Activated CD4-positive, alpha-beta memory T cell treated with anti-CD3 and anti-CD28 coated beads for 36 hours (primary cell): ENCODE measurements at regions of chr16 and their contacts with region 1.

Region 1: DNA sequence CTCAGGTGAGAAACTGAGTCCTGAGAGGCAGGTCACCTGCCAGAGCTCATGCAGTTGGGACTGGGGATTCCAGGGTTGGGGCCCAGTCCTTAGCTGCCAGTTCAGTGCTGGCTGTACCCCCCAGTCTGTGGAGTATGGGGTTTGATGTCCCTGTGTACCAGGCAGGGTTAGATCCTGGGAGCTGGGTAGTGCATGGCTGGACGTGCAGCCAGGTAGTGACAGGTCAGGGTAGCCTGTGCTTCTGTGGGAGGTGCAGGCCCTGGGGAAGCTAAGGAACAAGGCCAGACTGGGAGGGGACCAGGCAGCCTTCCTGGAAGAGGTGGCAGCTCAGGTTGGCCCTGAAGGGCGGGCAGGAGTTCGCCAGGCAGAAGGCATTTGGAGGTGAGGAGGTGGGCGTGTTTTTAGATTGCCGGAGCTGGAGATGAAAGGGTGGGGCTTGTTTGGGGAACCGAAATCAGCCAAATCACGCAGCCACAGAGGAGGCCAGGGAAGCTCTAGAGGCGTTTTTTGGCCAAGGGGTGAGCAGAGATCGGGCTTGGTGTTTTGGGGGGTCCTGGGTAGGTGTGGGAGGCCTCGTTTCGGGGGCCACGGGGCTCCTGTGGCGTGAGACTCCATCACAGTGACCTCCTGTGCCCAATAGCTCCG is 7.5 kb downstream of the ADCY7 start:
- DNase-seq: peak; percentile 67
- H3K4me3 Mint-ChIP-seq: peak overlapping the region; percentile 94
- H3K27ac Mint-ChIP-seq: peak overlapping the region; percentile 99
- H3K4me1 Mint-ChIP-seq: peaks cover 91% of the 10 kb centered on the region
- H3K27me3 Mint-ChIP-seq: no peaks in the 10 kb centered on the region

Region 2: GRCh38 chr16:50185005-50185505 is 88.7 kb before region 1 on chr16:
- CTCF ChIA-PET with region 1: no interaction called
- POLR2A ChIA-PET with region 1: no interaction called
- intact Hi-C with region 1: no loop called
- DNase-seq: no peak
- H3K4me3 Mint-ChIP-seq: no peak overlapping the region
- H3K27ac Mint-ChIP-seq: no peak overlapping the region
- H3K4me1 Mint-ChIP-seq: peaks cover 45% of the 10 kb centered on the region
- H3K27me3 Mint-ChIP-seq: no peaks in the 10 kb centered on the region

Region 3: GRCh38 chr16:50210266-50211038 is 63.4 kb before region 1 on chr16:
- CTCF ChIA-PET with region 1: interaction called, 10 read pairs
- POLR2A ChIA-PET with region 1: no interaction called
- intact Hi-C with region 1: no loop called
- DNase-seq: peak; percentile 80
- H3K4me3 Mint-ChIP-seq: no peak overlapping the region
- H3K27ac Mint-ChIP-seq: peak overlapping the region; percentile 46
- H3K4me1 Mint-ChIP-seq: peaks cover 17% of the 10 kb centered on the region
- H3K27me3 Mint-ChIP-seq: no peaks in the 10 kb centered on the region

Region 4: GRCh38 chr16:50326949-50327402 is 53.2 kb after region 1 on chr16:
- CTCF ChIA-PET with region 1: interaction called, 23 read pairs
- POLR2A ChIA-PET with region 1: interaction called, 3 read pairs
- intact Hi-C with region 1: no loop called
- DNase-seq: peak; percentile 81
- H3K4me3 Mint-ChIP-seq: no peak overlapping the region
- H3K27ac Mint-ChIP-seq: peak overlapping the region; percentile 45
- H3K4me1 Mint-ChIP-seq: peaks cover 59% of the 10 kb centered on the region
- H3K27me3 Mint-ChIP-seq: no peaks in the 10 kb centered on the region

Region 5: GRCh38 chr16:50354629-50355456 is 81.0 kb after region 1 on chr16:
- CTCF ChIA-PET with region 1: interaction called, 14 read pairs
- POLR2A ChIA-PET with region 1: no interaction called
- intact Hi-C with region 1: no loop called
- DNase-seq: no peak
- H3K4me3 Mint-ChIP-seq: no peak overlapping the region
- H3K27ac Mint-ChIP-seq: no peak overlapping the region
- H3K4me1 Mint-ChIP-seq: peaks cover 30% of the 10 kb centered on the region
- H3K27me3 Mint-ChIP-seq: no peaks in the 10 kb centered on the region

Region 6: GRCh38 chr16:50696575-50697420 is 423.0 kb after region 1 on chr16:
- CTCF ChIA-PET with region 1: no interaction called
- POLR2A ChIA-PET with region 1: interaction called, 5 read pairs
- intact Hi-C with region 1: loop called (anchors 5 kb)
- DNase-seq: peak; percentile 90
- H3K4me3 Mint-ChIP-seq: peak overlapping the region; percentile 78
- H3K27ac Mint-ChIP-seq: peak overlapping the region; percentile 98
- H3K4me1 Mint-ChIP-seq: peaks cover 89% of the 10 kb centered on the region
- H3K27me3 Mint-ChIP-seq: no peaks in the 10 kb centered on the region

Region 7: GRCh38 chr16:50763211-50763610 is 489.4 kb after region 1 on chr16:
- CTCF ChIA-PET with region 1: no interaction called
- POLR2A ChIA-PET with region 1: no interaction called
- intact Hi-C with region 1: loop called (anchors 1 kb)
- DNase-seq: no peak
- H3K4me3 Mint-ChIP-seq: no peak overlapping the region
- H3K27ac Mint-ChIP-seq: peak overlapping the region; percentile 43
- H3K4me1 Mint-ChIP-seq: peaks cover 89% of the 10 kb centered on the region
- H3K27me3 Mint-ChIP-seq: no peaks in the 10 kb centered on the region